ENCODE measurements at regions of chr18 and their contacts with region 1.

Region 1: DNA sequence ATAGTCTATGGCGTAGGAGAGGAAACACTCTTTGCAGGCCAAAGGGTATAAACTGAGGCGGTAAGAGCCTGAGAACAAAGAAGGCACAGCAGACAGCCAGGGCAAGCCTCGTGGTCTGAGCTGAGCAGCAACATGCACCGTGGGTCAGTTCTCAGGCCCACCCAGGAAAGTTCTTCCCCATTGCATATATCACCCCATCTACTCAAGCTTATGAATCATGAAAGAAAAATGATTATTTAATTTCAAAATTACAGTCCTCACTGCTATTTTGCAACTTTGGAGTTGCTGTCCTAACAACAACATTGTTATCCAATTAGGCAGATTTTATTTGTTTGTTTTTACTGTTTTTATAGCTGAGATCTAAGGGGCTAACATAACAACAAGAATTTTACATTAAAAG is 54.7 kb upstream of the RIOK3 start:
- DNase-seq: no peak
- ATAC-seq: no peak

Region 2: DNA sequence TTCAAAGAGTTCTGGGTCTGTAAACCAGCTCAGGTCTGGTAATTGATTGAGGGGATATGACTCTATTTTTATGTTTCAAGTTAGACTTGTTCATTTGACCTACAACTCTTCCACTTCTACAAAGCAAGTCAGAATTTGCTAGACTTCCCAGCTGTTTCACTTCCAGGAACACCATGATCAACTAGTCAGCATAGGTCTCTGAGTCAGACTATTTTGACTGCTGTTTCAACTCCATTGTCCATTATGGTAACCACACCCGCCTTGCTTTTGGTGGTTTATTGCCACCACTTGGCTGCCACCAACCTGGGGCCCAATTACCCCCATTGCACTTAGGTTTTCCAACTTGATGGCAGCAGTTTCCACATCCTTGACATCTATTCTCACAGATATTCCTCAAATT is 407.5 kb after region 1 on chr18:
- intact Hi-C with region 1: loop called (anchors 5 kb)
- DNase-seq: no peak
- ATAC-seq: no peak

Measured in left ventricle myocardium superior (tissue), 1 donor.